MCF 10A (cell line): ENCODE measurements at regions of chr2 and their contacts with region 1.

Region 1: DNA sequence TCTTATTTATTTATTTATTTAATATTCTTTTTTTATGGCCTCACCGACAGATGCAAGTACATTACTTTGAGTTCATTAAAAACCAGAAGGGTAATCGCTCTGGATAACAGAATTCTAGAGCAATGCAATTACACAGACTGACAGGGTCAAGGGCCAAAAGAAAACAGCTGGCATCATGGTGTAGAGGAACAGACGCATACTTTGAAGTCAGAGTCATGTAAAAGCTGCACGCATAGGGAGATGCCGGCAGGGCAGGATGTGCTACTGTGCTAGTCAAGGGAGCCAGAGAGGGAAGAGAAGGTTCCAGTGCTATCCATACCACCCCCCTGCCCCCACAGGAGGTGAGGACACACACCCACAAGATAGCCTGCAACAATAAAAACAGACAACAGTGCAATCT is 115.2 kb upstream of the TFCP2L1 start:
- DNase-seq: no peak
- H3K4me3 Mint-ChIP-seq: no peak overlapping the region
- H3K27ac Mint-ChIP-seq: no peak overlapping the region
- H3K4me1 Mint-ChIP-seq: no peaks in the 10 kb centered on the region
- H3K27me3 Mint-ChIP-seq: no peaks in the 10 kb centered on the region
- CTCF ChIP-seq: no peak

Region 2: GRCh38 chr2:121088251-121089165 is 311.7 kb before region 1 on chr2:
- CTCF ChIA-PET with region 1: interaction called, 11 read pairs
- POLR2A ChIA-PET with region 1: no interaction called
- intact Hi-C with region 1: no loop called
- DNase-seq: no peak
- H3K4me3 Mint-ChIP-seq: no peak overlapping the region
- H3K27ac Mint-ChIP-seq: no peak overlapping the region
- H3K4me1 Mint-ChIP-seq: peaks cover under 1% of the 10 kb centered on the region
- H3K27me3 Mint-ChIP-seq: no peaks in the 10 kb centered on the region
- CTCF ChIP-seq: no peak

Region 3: GRCh38 chr2:121386707-121387106 is 13.5 kb before region 1 on chr2:
- CTCF ChIA-PET with region 1: interaction called, 10 read pairs
- POLR2A ChIA-PET with region 1: interaction called, 3 read pairs
- intact Hi-C with region 1: no loop called
- DNase-seq: peak; percentile 44
- H3K4me3 Mint-ChIP-seq: peak overlapping the region; percentile 35
- H3K27ac Mint-ChIP-seq: peak overlapping the region; percentile 75
- H3K4me1 Mint-ChIP-seq: peaks cover 22% of the 10 kb centered on the region
- H3K27me3 Mint-ChIP-seq: no peaks in the 10 kb centered on the region
- CTCF ChIP-seq: no peak

Region 4: GRCh38 chr2:121454549-121455090 is 54.4 kb after region 1 on chr2:
- CTCF ChIA-PET with region 1: interaction called, 13 read pairs
- POLR2A ChIA-PET with region 1: no interaction called
- intact Hi-C with region 1: no loop called
- DNase-seq: no peak
- H3K4me3 Mint-ChIP-seq: no peak overlapping the region
- H3K27ac Mint-ChIP-seq: no peak overlapping the region
- H3K4me1 Mint-ChIP-seq: no peaks in the 10 kb centered on the region
- H3K27me3 Mint-ChIP-seq: no peaks in the 10 kb centered on the region
- CTCF ChIP-seq: no peak

Region 5: GRCh38 chr2:121505005-121505404 is 104.8 kb after region 1 on chr2:
- CTCF ChIA-PET with region 1: interaction called, 3 read pairs
- POLR2A ChIA-PET with region 1: interaction called, 3 read pairs
- intact Hi-C with region 1: loop called (anchors 5 kb)
- DNase-seq: peak; percentile 86
- H3K4me3 Mint-ChIP-seq: peak overlapping the region; percentile 62
- H3K27ac Mint-ChIP-seq: peak overlapping the region; percentile 72
- H3K4me1 Mint-ChIP-seq: peaks cover 61% of the 10 kb centered on the region
- H3K27me3 Mint-ChIP-seq: no peaks in the 10 kb centered on the region
- CTCF ChIP-seq: no peak

Region 6: GRCh38 chr2:121748202-121748601 is 348.0 kb after region 1 on chr2:
- CTCF ChIA-PET with region 1: no interaction called
- POLR2A ChIA-PET with region 1: no interaction called
- intact Hi-C with region 1: loop called (anchors 5 kb)
- DNase-seq: peak; percentile 64
- H3K4me3 Mint-ChIP-seq: no peak overlapping the region
- H3K27ac Mint-ChIP-seq: no peak overlapping the region
- H3K4me1 Mint-ChIP-seq: no peaks in the 10 kb centered on the region
- H3K27me3 Mint-ChIP-seq: no peaks in the 10 kb centered on the region
- CTCF ChIP-seq: peak; percentile 38